ENCODE measurements at regions of chr16 and their contacts with region 1.

Region 1: GRCh38 chr16:23803591-23804123 is 32.1 kb upstream of the PRKCB start:
- DNase-seq: no peak
- ATAC-seq: peak; percentile 98
- H3K4me3 ChIP-seq: no peak overlapping the region
- H3K27ac ChIP-seq: no peak overlapping the region
- H3K4me1 ChIP-seq: peaks cover 20% of the 10 kb centered on the region
- H3K27me3 ChIP-seq: no peaks in the 10 kb centered on the region
- CTCF ChIP-seq: peak; percentile 87 to 92 (median 88); a peak in 5 of 6 replicates
- EP300 ChIP-seq: no peak
- POLR2A ChIP-seq: no peak
- RAD21 ChIP-seq: peak; percentile 84

Region 2: DNA sequence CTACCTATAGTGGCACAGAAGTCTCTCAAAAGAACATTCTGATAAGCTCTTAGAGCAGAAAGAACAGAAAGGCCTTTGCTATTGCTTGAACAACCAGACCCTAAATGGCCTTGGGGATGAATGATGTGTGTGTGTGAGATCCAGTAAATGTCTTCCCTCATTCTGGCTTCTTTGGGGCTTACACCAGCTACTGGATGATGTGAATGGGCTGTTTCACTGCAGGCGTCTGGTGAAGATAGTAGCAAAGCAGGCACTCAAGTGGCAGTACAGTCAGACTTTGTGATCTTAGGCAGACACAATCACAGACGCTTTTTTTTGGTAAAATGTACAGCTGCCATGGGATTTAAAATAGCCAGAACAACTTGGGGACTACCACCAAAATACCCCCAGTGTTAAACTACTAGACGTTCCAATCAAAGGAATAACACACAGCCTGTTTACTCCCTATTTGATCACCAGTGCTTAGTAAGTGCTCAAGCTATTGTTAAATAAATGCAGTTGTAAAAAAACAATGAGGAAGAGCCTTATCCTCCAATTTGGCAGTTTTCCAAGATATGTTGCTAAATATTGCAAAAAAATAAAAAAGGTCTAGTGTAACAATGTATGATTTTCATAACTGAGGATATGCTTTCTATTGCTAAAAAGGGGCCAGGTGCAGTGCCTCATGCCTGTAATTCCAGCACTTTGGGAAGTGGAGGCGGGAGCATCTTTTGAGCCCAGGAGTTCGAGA is 225.4 kb before region 1 on chr16:
- CTCF ChIA-PET with region 1: no interaction called
- POLR2A ChIA-PET with region 1: no interaction called
- RAD21 ChIA-PET with region 1: no interaction called
- SMC1A ChIA-PET with region 1: no interaction called
- in situ Hi-C with region 1: no loop called
- intact Hi-C with region 1: no loop called
- DNase-seq: no peak
- ATAC-seq: no peak
- H3K4me3 ChIP-seq: no peak overlapping the region
- H3K27ac ChIP-seq: no peak overlapping the region
- H3K4me1 ChIP-seq: no peaks in the 10 kb centered on the region
- H3K27me3 ChIP-seq: no peaks in the 10 kb centered on the region
- CTCF ChIP-seq: no peak
- EP300 ChIP-seq: no peak
- POLR2A ChIP-seq: no peak
- RAD21 ChIP-seq: no peak

Region 3: DNA sequence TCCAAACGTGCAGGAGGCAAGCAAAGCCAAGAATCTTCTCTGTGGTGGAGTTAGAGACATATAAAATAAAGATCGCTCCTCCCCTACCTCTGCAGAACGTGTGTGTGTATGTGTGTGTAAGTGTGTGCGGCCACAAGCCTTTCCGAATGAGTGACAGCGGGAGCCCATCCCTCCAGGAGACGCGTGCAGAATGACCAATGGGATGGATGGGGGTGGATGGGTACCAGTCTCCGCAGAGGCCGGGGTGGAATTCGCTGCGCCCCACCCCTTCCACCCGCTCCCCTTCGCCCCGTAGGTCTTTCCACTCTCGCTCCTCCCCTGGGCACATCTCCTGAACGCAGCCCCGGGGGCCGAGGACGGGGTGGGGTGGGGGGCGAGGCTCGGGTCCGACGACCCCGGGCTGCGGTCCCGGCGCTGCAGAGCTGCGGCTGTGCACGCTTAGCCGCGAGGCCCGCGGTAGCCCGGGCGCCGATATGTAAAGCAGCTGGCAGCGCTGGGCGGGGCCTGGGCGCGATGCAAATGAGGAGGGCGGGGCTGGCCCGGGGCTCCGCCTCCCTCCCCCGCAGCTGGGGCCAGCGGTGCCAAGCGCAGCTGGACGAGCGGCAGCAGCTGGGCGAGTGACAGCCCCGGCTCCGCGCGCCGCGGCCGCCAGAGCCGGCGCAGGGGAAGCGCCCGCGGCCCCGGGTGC is 31.9 kb after region 1 on chr16 and contains the start of gene PRKCB:
- CTCF ChIA-PET with region 1: interaction called, 89 read pairs
- POLR2A ChIA-PET with region 1: interaction called, 9 read pairs
- RAD21 ChIA-PET with region 1: interaction called, 37 read pairs
- SMC1A ChIA-PET with region 1: interaction called, 89 read pairs
- in situ Hi-C with region 1: no loop called
- intact Hi-C with region 1: loop called (anchors 2 kb)
- DNase-seq: no peak
- ATAC-seq: peak; percentile 74
- H3K4me3 ChIP-seq: peak within 1 kb of the TSS; percentile 97
- H3K27ac ChIP-seq: peak within 1 kb of the TSS; percentile 83
- H3K4me1 ChIP-seq: peaks cover 13% of the 10 kb centered on the region
- H3K27me3 ChIP-seq: no peaks in the 10 kb centered on the region
- CTCF ChIP-seq: no peak
- EP300 ChIP-seq: no peak
- POLR2A ChIP-seq: peak; percentile 74; the same call in 1 of the 2 replicates
- RAD21 ChIP-seq: no peak
- polyA plus RNA-seq, gene PRKCB: 42.4 to 60.2 TPM

Region 4: DNA sequence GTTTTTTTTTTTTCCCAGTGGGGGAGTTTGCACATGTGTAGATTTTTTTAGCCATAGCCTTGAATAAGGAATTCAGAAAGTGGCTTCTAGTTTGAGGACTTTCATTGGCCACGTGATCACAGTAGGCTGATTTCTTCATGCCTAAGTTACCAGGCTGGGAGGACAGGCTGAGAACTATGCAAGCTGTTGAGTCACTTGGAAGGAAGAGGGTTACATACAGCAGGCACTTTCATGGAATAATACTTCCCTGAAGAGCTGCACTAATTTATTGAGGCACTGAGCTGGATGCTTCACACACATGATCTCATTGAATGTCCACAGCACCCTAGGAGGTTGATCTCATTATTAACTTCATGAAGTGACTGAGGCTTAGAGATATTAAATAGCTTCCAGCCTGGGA is 54.9 kb after region 1 on chr16:
- CTCF ChIA-PET with region 1: interaction called, 48 read pairs
- POLR2A ChIA-PET with region 1: interaction called, 5 read pairs
- RAD21 ChIA-PET with region 1: interaction called, 15 read pairs
- SMC1A ChIA-PET with region 1: interaction called, 85 read pairs
- in situ Hi-C with region 1: no loop called
- intact Hi-C with region 1: no loop called
- DNase-seq: no peak
- ATAC-seq: no peak
- H3K4me3 ChIP-seq: no peak overlapping the region
- H3K27ac ChIP-seq: peak overlapping the region; percentile 83
- H3K4me1 ChIP-seq: peaks cover 89% of the 10 kb centered on the region
- H3K27me3 ChIP-seq: no peaks in the 10 kb centered on the region
- CTCF ChIP-seq: no peak
- EP300 ChIP-seq: no peak
- POLR2A ChIP-seq: no peak
- RAD21 ChIP-seq: no peak

Region 5: DNA sequence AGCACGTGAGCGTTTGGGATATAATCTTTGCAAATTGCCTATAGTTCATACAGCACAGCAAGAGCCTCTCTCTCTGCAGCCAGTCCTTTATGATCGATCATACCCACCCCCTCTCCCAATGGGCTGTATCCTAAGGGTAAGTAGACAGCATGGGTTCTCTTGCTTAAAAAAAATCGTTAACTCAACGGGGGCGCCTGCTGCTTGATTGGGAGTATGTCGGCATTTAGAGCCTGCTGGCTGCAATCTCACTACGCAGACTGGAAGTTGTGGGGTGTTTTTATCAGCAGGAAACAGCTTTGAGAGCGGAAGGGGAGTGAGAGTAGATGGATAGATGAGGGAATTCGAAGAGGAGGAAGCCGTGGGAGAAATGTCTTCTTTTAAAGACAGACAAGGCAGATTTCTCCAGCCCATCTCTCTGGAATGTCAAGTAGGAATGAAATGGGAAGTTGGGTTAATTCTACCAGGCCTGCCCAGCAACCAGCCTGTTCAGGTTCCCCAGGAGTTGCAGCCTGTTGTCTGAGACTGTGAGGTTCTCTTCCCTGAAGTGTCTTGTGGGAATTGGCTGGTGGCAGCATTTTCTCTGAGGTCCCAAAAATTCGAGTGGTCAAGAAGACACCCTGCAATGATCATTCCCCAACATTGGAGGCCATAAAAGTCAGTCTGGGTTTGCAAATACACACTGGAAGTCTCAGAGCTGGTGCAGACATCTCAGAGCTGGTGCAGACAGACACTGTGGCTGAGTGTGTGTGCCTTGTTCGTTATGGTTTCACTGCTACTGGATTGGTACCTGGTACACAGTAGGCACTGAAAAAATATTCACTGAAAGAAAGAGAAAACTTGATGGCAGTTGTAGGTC is 97.7 kb after region 1 on chr16:
- CTCF ChIA-PET with region 1: interaction called, 8 read pairs
- POLR2A ChIA-PET with region 1: interaction called, 4 read pairs
- RAD21 ChIA-PET with region 1: interaction called, 4 read pairs
- SMC1A ChIA-PET with region 1: interaction called, 5 read pairs
- in situ Hi-C with region 1: no loop called
- intact Hi-C with region 1: loop called (anchors 5 kb)
- DNase-seq: no peak
- ATAC-seq: no peak
- H3K4me3 ChIP-seq: no peak overlapping the region
- H3K27ac ChIP-seq: no peak overlapping the region; the same call in none of the 2 replicates
- H3K4me1 ChIP-seq: peaks cover 9% of the 10 kb centered on the region
- H3K27me3 ChIP-seq: no peaks in the 10 kb centered on the region
- CTCF ChIP-seq: no peak
- EP300 ChIP-seq: no peak
- POLR2A ChIP-seq: no peak
- RAD21 ChIP-seq: no peak

Region 6: GRCh38 chr16:24010440-24011089 is 206.9 kb after region 1 on chr16:
- CTCF ChIA-PET with region 1: interaction called, 425 read pairs
- POLR2A ChIA-PET with region 1: interaction called, 10 read pairs
- RAD21 ChIA-PET with region 1: interaction called, 146 read pairs
- SMC1A ChIA-PET with region 1: interaction called, 237 read pairs
- in situ Hi-C with region 1: loop called (anchors 5 kb)
- intact Hi-C with region 1: loop called (anchors 1 kb)
- DNase-seq: peak; percentile 60
- ATAC-seq: peak; percentile 61
- H3K4me3 ChIP-seq: no peak overlapping the region
- H3K27ac ChIP-seq: peak overlapping the region; percentile 53; the same call in 1 of the 2 replicates
- H3K4me1 ChIP-seq: peaks cover 65% of the 10 kb centered on the region
- H3K27me3 ChIP-seq: no peaks in the 10 kb centered on the region
- CTCF ChIP-seq: peak; percentile 71 to 84 (median 81)
- EP300 ChIP-seq: no peak
- POLR2A ChIP-seq: no peak
- RAD21 ChIP-seq: peak; percentile 90

Region 7: GRCh38 chr16:24041826-24042631 is 238.4 kb after region 1 on chr16:
- CTCF ChIA-PET with region 1: interaction called, 125 read pairs
- POLR2A ChIA-PET with region 1: no interaction called
- RAD21 ChIA-PET with region 1: interaction called, 30 read pairs
- SMC1A ChIA-PET with region 1: interaction called, 70 read pairs
- in situ Hi-C with region 1: no loop called
- intact Hi-C with region 1: no loop called
- DNase-seq: peak; percentile 45
- ATAC-seq: peak; percentile 98
- H3K4me3 ChIP-seq: no peak overlapping the region
- H3K27ac ChIP-seq: no peak overlapping the region
- H3K4me1 ChIP-seq: no peaks in the 10 kb centered on the region
- H3K27me3 ChIP-seq: no peaks in the 10 kb centered on the region
- CTCF ChIP-seq: peak; percentile 64 to 80 (median 72)
- EP300 ChIP-seq: no peak
- POLR2A ChIP-seq: no peak
- RAD21 ChIP-seq: peak; percentile 77

Region 8: GRCh38 chr16:24504472-24505345 is 701.1 kb after region 1 on chr16:
- CTCF ChIA-PET with region 1: interaction called, 12 read pairs
- POLR2A ChIA-PET with region 1: no interaction called
- RAD21 ChIA-PET with region 1: interaction called, 11 read pairs
- SMC1A ChIA-PET with region 1: interaction called, 7 read pairs
- in situ Hi-C with region 1: loop called (anchors 5 kb)
- intact Hi-C with region 1: loop called (anchors 2 kb)
- DNase-seq: peak; percentile 17
- ATAC-seq: peak; percentile 98
- H3K4me3 ChIP-seq: no peak overlapping the region
- H3K27ac ChIP-seq: no peak overlapping the region
- H3K4me1 ChIP-seq: no peaks in the 10 kb centered on the region
- H3K27me3 ChIP-seq: no peaks in the 10 kb centered on the region
- CTCF ChIP-seq: peak; percentile 76 to 87 (median 79)
- EP300 ChIP-seq: no peak
- POLR2A ChIP-seq: no peak
- RAD21 ChIP-seq: peak; percentile 91

Measured in GM12878 (cell line).